Body of pancreas (tissue), 4 donors: ENCODE measurements at regions of chr17 and their contacts with region 1.

Region 1: DNA sequence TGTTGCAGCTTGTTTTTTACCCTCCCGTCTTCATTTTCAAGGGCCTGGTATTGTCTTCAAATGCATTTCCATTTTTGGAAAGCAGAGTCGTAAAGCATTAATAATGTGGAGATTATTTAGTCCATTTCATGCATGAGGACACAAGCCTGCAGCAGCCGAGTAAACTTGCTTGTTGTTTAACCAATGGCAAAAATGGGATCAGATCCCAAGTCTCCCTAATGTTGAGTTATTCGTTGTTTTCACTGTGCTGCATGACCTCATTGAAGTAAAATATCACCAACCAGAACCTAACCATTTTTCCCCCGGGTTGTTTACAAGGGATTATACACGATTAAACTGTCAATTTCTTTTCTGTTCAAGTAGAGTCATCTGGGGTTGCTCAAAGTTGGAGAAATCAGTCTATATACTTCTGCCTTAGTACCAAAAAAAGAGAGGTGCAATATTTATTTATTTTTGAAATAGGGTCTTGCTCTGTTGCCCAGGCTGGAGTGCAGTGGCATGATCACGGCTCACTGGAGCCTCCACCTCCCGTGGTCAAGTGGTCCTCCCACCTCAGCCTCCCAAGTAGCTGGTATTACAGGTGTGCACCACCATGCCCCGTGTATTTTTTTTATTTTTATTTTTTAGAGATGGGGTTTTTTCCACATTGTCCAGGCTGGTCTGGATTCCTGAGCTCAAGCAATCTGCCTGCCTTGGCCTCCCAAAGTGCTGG is 12.4 kb downstream of the AMZ2 start:
- DNase-seq: no peak
- ATAC-seq: no peak
- H3K4me3 ChIP-seq: no peak overlapping the region
- H3K27ac ChIP-seq: no peak overlapping the region
- H3K4me1 ChIP-seq: no peaks in the 10 kb centered on the region
- H3K27me3 ChIP-seq: no peaks in the 10 kb centered on the region
- CTCF ChIP-seq: no peak
- POLR2A ChIP-seq: no peak

Region 2: DNA sequence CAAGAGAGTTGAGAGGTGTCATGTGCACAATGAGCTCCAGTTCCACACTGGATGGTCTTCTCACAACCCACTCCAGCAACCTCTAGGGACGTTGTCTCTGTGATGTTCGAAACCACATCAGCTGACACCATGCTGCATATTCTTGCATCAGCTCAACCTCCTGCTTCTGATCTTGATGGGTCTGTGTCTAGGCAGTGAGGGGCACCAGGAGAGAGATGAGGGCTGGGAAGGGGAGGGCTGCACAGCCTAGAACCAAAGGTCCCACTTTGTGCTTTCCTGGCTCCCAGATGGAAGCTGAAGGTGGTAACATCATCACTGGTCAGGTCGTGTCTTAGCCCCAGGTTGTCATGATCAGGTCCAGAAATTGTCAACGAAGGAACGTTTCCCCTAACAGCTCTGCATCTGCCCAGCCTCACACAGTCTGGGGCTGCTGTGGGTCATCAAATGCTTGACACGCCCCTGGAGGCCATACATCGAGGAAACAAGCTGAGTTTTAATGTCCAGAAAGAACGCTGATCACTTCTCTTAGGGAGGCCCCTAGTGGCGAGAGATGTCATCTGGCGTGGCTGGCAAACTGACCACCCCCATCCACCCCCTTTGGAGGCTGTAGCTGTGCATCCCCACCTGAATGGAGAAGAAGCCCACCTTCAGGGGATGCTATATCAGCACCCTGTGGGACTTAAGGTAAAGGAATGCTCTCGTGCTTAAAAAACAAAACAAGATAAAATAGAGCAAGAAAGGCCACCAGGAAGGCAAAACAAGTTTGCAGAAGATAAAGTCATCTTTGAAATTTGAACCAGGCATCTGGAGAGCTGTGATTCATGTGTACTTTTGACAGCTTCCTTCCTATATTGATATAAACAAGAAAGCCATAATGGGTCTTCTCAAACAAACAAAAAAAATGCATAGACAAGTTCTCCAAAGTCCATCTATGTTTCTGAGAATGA is 138.8 kb after region 1 on chr17:
- intact Hi-C with region 1: loop called (anchors 10 kb)
- DNase-seq: peak; percentile 58 to 69 (median 64)
- ATAC-seq: peak; percentile 78
- H3K4me3 ChIP-seq: no peak overlapping the region
- H3K27ac ChIP-seq: no peak overlapping the region
- H3K4me1 ChIP-seq: no peaks in the 10 kb centered on the region
- H3K27me3 ChIP-seq: no peaks in the 10 kb centered on the region
- CTCF ChIP-seq: peak; percentile 45 to 86 (median 70)
- POLR2A ChIP-seq: no peak

Region 3: DNA sequence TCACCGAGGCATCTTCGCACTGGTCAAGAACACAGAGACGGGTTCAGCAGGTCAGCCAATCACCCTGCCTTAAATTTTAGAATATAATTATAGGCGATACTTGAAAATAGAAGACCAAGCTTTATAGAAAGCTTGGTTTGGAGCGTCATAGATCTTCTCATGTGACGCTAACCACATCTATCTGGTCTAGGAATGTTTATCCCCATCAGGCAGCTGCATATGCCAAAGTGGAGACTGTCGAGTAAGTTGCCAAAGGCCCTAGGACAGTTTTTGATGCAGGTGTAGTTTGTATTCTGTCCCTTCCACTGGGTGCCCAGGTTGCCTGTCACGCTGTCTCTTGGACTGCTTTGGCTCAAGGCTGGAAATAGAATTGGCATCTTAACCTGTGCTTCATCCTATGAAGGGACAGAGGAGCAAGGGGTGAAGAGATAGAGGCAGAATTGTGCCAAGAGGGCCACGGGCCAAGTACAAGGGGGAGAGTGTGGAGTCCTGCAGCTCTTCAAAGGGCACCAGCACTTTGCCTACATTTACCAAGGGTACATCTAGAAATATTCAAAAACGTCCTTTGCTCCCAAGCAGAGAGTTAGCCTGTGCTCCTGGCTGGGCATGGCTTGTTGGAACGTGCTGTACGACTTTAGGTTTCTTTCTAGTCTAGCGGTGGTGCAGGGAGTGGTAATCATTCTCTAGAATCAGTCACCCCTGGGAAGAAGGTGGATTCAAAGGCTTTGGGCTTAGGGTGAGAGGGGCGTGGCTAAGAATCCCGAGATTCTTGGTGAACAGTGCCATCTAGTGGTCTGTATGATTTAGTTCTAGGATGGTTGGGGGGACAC is 202.4 kb after region 1 on chr17:
- intact Hi-C with region 1: loop called (anchors 10 kb)
- DNase-seq: peak; percentile 68 to 79 (median 76)
- ATAC-seq: peak; percentile 81
- H3K4me3 ChIP-seq: no peak overlapping the region
- H3K27ac ChIP-seq: no peak overlapping the region
- H3K4me1 ChIP-seq: peaks cover 36% of the 10 kb centered on the region
- H3K27me3 ChIP-seq: no peaks in the 10 kb centered on the region
- CTCF ChIP-seq: peak; percentile 45 to 84 (median 80)
- POLR2A ChIP-seq: no peak